H1 (cell line): ENCODE measurements at regions of chr15 and their contacts with region 1.

Region 1: DNA sequence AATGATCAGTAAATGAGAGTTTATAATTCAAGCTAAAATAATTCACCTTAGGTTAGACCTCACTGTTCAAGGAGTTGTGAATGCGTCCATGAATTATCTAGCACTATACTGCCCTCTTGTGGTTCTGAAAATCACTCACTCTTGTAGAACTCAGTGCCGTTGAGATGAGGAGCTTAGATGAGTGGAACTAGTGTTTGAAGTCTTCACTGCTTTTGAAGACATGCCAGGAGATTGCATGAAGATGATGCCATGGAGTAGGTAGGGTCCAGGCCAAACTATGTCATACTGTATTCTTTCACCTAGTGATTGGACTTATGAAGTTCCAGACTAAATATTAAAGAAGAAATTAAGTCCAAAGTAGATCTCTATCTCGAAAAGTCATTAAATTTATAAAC is 28.8 kb downstream of the LYSMD4 start:
- DNase-seq: no peak
- H3K4me3 ChIP-seq: no peak overlapping the region
- H3K27ac ChIP-seq: no peak overlapping the region
- H3K4me1 ChIP-seq: no peaks in the 10 kb centered on the region; a peak in 1 of 7 replicates
- H3K27me3 ChIP-seq: no peaks in the 10 kb centered on the region
- CTCF ChIP-seq: peak in 2 of 3 experiments; percentile 69 to 77; a peak in 3 of 4 replicates
- EP300 ChIP-seq: no peak
- POLR2A ChIP-seq: no peak
- RAD21 ChIP-seq: peak; percentile 86 to 87

Region 2: DNA sequence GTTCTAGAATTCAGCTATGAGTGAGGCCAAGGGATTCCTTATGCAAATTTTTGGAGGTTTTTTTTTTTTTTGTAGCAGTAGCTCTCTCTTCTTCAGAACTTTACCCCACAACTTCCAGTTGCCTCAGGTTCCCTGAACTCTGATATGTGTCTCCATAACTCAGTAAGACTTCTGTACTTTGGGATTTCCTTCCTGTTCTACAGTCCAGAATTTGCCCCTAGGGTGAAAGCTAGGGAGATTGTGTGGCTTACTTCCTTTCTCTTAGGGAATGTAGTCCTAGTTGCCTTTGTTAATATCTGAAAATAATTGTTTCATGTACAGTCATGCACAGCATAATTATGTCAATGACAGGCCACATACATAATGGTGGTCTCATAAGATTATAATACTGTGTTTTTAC is 422.3 kb before region 1 on chr15:
- CTCF ChIA-PET with region 1: interaction called, 17 read pairs
- POLR2A ChIA-PET with region 1: no interaction called
- DNase-seq: no peak
- H3K4me3 ChIP-seq: no peak overlapping the region
- H3K27ac ChIP-seq: no peak overlapping the region
- H3K4me1 ChIP-seq: 0 out of 7 replicates have a peak, but pooled peaks cover 0 to 2% (median 0%) of the 10 kb centered on the region in 4 experiments
- H3K27me3 ChIP-seq: no peaks in the 10 kb centered on the region
- CTCF ChIP-seq: no peak
- EP300 ChIP-seq: no peak
- POLR2A ChIP-seq: no peak
- RAD21 ChIP-seq: no peak

Region 3: DNA sequence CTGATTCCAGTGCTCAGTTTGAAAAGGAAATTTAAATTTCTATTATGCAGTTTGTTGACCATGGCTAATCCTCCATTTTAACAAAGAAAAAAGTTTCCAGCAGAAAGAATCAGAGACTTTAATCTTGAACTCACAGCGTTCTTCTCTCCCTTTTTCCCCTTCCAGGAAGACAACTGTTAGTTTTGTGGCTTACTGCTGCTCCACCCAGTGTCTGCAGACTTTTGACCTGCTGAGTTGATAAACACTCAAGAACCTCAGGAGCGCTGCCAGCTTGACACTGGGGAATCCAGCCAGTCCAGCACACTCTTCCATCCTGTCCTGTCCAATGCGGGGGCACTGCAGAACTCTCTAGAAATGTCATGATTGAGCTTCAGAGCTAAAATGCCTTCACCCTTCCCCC is 318.6 kb before region 1 on chr15:
- CTCF ChIA-PET with region 1: interaction called, 10 read pairs
- POLR2A ChIA-PET with region 1: no interaction called
- DNase-seq: no peak
- H3K4me3 ChIP-seq: no peak overlapping the region
- H3K27ac ChIP-seq: no peak overlapping the region
- H3K4me1 ChIP-seq: peaks cover 0 to 3% (median under 1%) of the 10 kb centered on the region in 4 experiments; a peak in 4 of 7 replicates
- H3K27me3 ChIP-seq: no peaks in the 10 kb centered on the region
- CTCF ChIP-seq: no peak
- EP300 ChIP-seq: no peak
- POLR2A ChIP-seq: no peak
- RAD21 ChIP-seq: no peak

Region 4: DNA sequence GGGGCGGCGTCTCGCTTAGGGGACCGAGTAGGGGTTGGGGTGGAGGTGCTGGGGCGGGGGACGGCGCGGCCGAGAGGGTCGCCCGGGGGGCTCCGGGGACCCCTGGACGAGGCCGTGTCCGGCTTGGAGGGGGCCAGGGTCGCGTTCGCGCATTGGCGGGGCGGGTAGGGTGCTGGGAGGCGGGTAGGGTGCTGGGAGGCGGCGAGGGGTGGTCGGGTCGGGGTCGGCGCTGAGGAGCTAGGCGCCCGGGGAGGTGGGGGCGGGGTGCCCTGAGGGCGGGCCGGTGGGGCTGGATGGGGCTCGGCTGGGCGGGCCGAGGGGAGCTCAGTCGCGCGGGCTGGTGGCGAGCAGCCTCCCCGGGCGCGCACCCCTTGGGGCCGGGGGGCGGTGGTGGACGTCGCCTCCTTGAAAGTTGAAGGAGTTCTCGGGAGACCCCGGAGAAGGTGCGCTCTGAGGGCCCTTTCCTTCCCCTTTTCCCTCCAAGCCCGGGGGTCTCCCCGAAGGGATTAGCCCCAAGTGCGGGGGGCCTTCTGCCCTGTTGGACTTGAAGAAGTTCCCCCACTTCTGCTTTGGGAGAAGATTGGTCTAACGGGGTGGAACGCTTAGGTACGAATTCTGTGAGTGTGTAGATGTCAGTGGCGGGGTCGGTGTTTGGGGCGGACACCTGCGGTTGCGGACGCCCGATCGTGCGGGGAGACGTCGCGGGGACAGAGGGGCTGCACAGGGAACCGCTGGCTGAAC is 138.1 kb before region 1 on chr15:
- CTCF ChIA-PET with region 1: interaction called, 15 read pairs
- POLR2A ChIA-PET with region 1: interaction called, 4 read pairs
- DNase-seq: peak in 1 of 2 experiments; percentile 67
- H3K4me3 ChIP-seq: peak overlapping the region; percentile 76 to 95 (median 90)
- H3K27ac ChIP-seq: peak overlapping the region; percentile 78; the same call in 1 of the 2 replicates
- H3K4me1 ChIP-seq: peaks cover 2 to 25% (median 16%) of the 10 kb centered on the region in 4 experiments; a peak in 6 of 7 replicates
- H3K27me3 ChIP-seq: no peaks in the 10 kb centered on the region
- CTCF ChIP-seq: no peak
- EP300 ChIP-seq: no peak
- POLR2A ChIP-seq: no peak
- RAD21 ChIP-seq: no peak

Region 5: DNA sequence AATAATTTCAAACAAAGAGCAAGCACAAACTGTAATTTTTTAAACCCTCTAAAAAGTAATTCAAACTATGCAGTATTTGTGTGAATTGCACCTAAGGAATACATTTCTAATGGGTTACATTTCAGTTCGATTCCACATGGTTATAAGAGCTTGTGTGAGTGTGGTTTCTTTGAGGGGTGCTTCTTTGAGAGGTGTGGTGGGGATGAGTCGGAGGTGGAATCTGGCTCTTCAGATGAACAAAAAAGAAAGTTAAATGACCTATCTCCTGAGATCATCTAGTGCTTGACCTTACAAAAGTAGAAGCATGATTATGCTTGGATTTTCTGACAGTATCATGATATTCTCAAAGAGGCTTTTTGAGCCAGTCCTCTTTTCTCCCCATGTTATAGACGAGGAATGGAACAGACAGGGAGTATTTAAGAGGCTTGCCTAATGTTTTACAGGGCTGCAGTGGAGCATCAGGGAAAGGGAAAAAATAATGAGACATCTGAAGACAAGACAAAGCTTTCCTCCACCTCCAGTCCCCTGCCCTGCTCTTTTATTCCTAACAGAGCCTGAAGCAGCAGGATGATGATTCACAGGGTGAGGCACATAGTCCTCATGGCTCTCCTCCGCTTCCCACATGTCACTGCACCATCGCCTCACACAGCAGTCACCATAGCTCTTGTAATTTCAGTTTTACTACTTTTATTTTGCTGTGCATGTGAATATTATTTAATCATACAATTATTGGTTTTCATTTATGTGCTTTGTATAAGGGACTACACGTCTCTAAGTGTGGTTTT is 53.2 kb before region 1 on chr15:
- CTCF ChIA-PET with region 1: no interaction called
- POLR2A ChIA-PET with region 1: no interaction called
- DNase-seq: no peak
- H3K4me3 ChIP-seq: no peak overlapping the region
- H3K27ac ChIP-seq: no peak overlapping the region
- H3K4me1 ChIP-seq: no peaks in the 10 kb centered on the region
- H3K27me3 ChIP-seq: no peaks in the 10 kb centered on the region
- CTCF ChIP-seq: no peak
- EP300 ChIP-seq: no peak
- POLR2A ChIP-seq: no peak
- RAD21 ChIP-seq: no peak

Region 6: GRCh38 chr15:99692825-99693224 is 11.6 kb before region 1 on chr15:
- CTCF ChIA-PET with region 1: interaction called, 30 read pairs
- POLR2A ChIA-PET with region 1: interaction called, 4 read pairs
- DNase-seq: no peak
- H3K4me3 ChIP-seq: no peak overlapping the region
- H3K27ac ChIP-seq: no peak overlapping the region
- H3K4me1 ChIP-seq: no peaks in the 10 kb centered on the region
- H3K27me3 ChIP-seq: no peaks in the 10 kb centered on the region
- CTCF ChIP-seq: no peak
- EP300 ChIP-seq: no peak
- POLR2A ChIP-seq: no peak
- RAD21 ChIP-seq: no peak

Region 7: DNA sequence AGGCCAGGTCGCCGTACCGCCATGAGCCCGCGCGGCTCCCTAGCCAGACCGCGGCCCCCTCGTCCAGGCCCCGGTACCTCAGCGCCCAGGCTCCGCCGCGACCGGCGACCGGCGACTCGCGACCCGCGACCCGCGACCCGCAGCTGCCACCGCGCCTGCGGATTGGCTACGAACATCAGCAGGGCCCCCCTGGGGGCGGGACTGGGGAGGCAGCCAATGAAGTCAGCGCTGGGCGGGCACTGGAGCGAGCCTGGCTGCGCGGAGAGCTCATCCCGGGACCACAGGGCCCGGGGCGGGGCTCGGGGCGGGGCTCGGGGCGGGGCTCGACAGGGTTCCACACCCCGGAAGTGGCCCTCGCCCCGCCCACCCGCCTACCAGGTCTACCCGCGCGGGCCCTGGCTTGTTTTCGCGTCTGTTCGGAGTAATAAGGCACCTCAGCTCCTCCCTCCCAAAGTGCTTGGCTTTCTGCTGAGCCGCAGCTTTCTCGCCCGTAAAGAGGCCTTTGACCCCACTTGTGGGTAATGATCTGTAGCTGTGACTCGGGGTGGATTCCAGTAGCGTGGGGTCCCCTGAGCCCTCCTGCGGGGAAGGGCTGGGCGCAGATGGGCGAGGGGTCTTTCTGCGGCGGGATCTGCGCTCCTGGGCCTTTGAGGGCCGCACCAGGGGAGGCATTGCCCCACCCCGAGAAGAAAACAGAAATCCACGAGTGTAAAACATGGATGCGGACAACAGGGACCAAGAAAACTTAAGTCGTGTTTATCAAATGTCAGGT is 29.0 kb after region 1 on chr15 and contains the start of gene LYSMD4:
- CTCF ChIA-PET with region 1: interaction called, 34 read pairs
- POLR2A ChIA-PET with region 1: interaction called, 4 read pairs
- DNase-seq: peak; percentile 85 to 97
- H3K4me3 ChIP-seq: peak within 1 kb of the TSS; percentile 70 to 88 (median 75)
- H3K27ac ChIP-seq: peak within 1 kb of the TSS; percentile 83
- H3K4me1 ChIP-seq: peaks cover 2 to 23% (median 6%) of the 10 kb centered on the region in 4 experiments; a peak in 5 of 7 replicates
- H3K27me3 ChIP-seq: peaks cover 0 to 10% (median 3%) of the 10 kb centered on the region in 4 experiments; a peak in 4 of 7 replicates
- CTCF ChIP-seq: no peak
- EP300 ChIP-seq: no peak
- POLR2A ChIP-seq: peak in 1 of 2 experiments; percentile 81; a peak in 2 of 3 replicates
- RAD21 ChIP-seq: no peak
- total RNA-seq, gene LYSMD4: 16.0 and 17.5 TPM in 2 replicates